CD4-positive, alpha-beta T cell (primary cell): ENCODE measurements at regions of chr15 and their contacts with region 1.

Region 1: DNA sequence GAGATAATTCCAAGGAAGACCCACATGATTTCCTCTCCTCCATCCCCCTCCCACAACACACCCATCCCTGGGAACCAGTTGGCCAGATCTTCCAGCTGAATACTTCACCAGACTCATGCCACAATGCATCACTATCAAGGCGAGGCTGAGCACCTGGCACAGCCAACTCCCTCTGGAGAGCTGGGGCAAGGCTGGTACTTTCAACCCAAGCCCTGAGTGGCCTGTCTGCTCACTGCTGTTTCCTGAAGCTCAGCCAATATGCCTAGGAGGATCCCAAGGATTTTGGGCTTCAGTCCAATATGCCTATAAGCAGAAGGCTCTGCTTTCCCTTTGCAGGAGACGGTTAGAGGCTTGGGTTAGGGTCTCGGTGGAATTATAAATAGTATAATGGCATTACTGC is 90.9 kb upstream of the NEO1 start:
- DNase-seq: no peak
- ATAC-seq: no peak
- H3K4me3 ChIP-seq: no peak overlapping the region
- H3K4me3 Mint-ChIP-seq: no peak overlapping the region
- H3K27ac ChIP-seq: no peak overlapping the region
- H3K27ac Mint-ChIP-seq: no peak overlapping the region
- H3K4me1 ChIP-seq: peaks cover 25% of the 10 kb centered on the region
- H3K4me1 Mint-ChIP-seq: no peaks in the 10 kb centered on the region
- H3K27me3 ChIP-seq: peaks cover 2 to 4% of the 10 kb centered on the region in 2 experiments
- H3K27me3 Mint-ChIP-seq: peaks cover 45% of the 10 kb centered on the region
- CTCF ChIP-seq: no peak

Region 2: GRCh38 chr15:72227192-72227586 is 734.2 kb before region 1 on chr15:
- CTCF ChIA-PET with region 1: no interaction called
- POLR2A ChIA-PET with region 1: no interaction called
- intact Hi-C with region 1: no loop called
- DNase-seq: peak in 6 of 14 experiments; percentile 23 to 66 (median 44)
- ATAC-seq: no peak
- H3K4me3 ChIP-seq: peak overlapping the region; percentile 96
- H3K4me3 Mint-ChIP-seq: peak overlapping the region; percentile 86
- H3K27ac ChIP-seq: peak overlapping the region; percentile 63 to 92
- H3K27ac Mint-ChIP-seq: peak overlapping the region; percentile 96
- H3K4me1 ChIP-seq: peaks cover 74% of the 10 kb centered on the region
- H3K4me1 Mint-ChIP-seq: peaks cover 80% of the 10 kb centered on the region
- H3K27me3 ChIP-seq: no peaks in the 10 kb centered on the region
- H3K27me3 Mint-ChIP-seq: no peaks in the 10 kb centered on the region
- CTCF ChIP-seq: no peak

Region 3: GRCh38 chr15:72732516-72732915 is 228.8 kb before region 1 on chr15:
- CTCF ChIA-PET with region 1: no interaction called
- POLR2A ChIA-PET with region 1: no interaction called
- intact Hi-C with region 1: loop called in 1 of 2 experiments (anchors 5 kb)
- DNase-seq: no peak
- ATAC-seq: no peak
- H3K4me3 ChIP-seq: no peak overlapping the region
- H3K4me3 Mint-ChIP-seq: no peak overlapping the region
- H3K27ac ChIP-seq: no peak overlapping the region
- H3K27ac Mint-ChIP-seq: peak overlapping the region; percentile 16
- H3K4me1 ChIP-seq: no peaks in the 10 kb centered on the region
- H3K4me1 Mint-ChIP-seq: peaks cover 11% of the 10 kb centered on the region
- H3K27me3 ChIP-seq: no peaks in the 10 kb centered on the region
- H3K27me3 Mint-ChIP-seq: no peaks in the 10 kb centered on the region
- CTCF ChIP-seq: no peak

Region 4: GRCh38 chr15:73009066-73010056 is 48.0 kb after region 1 on chr15:
- CTCF ChIA-PET with region 1: no interaction called
- POLR2A ChIA-PET with region 1: no interaction called
- intact Hi-C with region 1: loop called in 1 of 2 experiments (anchors 10 kb)
- DNase-seq: no peak
- ATAC-seq: no peak
- H3K4me3 ChIP-seq: no peak overlapping the region
- H3K4me3 Mint-ChIP-seq: no peak overlapping the region
- H3K27ac ChIP-seq: no peak overlapping the region
- H3K27ac Mint-ChIP-seq: no peak overlapping the region
- H3K4me1 ChIP-seq: no peaks in the 10 kb centered on the region
- H3K4me1 Mint-ChIP-seq: no peaks in the 10 kb centered on the region
- H3K27me3 ChIP-seq: peaks cover 3 to 9% of the 10 kb centered on the region in 2 experiments
- H3K27me3 Mint-ChIP-seq: peaks cover 47% of the 10 kb centered on the region
- CTCF ChIP-seq: no peak

Region 5: DNA sequence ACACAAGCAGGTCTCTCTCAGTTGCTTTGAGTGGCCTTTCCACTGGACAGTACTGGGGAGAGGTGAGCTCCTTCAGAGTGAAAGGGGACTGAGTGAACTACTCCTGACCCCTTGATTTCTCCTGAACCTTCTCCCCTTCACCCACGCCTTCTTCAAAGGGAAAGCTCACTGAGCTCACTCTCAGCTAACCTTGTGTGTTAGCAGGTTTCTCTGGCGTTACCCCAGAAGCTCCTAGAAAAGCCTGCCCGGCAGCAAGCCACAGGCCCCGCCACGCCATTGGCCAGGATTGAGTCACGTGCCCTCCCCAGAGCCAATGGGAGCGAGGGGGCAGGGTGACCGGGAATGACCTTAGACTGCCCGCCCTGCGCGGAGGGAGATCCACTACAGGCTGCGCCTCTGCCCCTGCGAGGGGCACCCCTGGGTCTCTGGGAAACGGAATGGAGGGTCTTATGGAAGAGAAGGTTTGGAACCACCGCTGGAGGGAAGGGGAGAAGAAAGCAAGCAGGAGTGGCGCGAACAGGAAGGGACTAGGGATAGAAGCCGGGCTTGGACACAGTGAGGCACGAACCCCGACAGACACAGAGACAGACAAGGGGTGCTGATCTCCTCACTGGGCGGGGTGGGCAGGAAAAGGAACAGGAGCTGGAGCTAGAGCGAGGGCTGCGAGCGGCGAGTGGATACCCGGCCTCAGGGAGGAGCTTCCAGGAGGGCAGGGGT is 1636.9 kb after region 1 on chr15:
- CTCF ChIA-PET with region 1: no interaction called
- POLR2A ChIA-PET with region 1: no interaction called
- intact Hi-C with region 1: no loop called
- DNase-seq: peak; percentile 67 to 91 (median 82)
- ATAC-seq: peak; percentile 97
- H3K4me3 ChIP-seq: peak overlapping the region; percentile 65
- H3K4me3 Mint-ChIP-seq: peak overlapping the region; percentile 99
- H3K27ac ChIP-seq: peak overlapping the region; percentile 66 to 76
- H3K27ac Mint-ChIP-seq: peak overlapping the region; percentile 94
- H3K4me1 ChIP-seq: peaks cover 19% of the 10 kb centered on the region
- H3K4me1 Mint-ChIP-seq: peaks cover 20% of the 10 kb centered on the region
- H3K27me3 ChIP-seq: no peaks in the 10 kb centered on the region
- H3K27me3 Mint-ChIP-seq: no peaks in the 10 kb centered on the region
- CTCF ChIP-seq: no peak